Left colon (tissue), 2 donors: ENCODE measurements at regions of chr5 and their contacts with region 1.

Region 1: DNA sequence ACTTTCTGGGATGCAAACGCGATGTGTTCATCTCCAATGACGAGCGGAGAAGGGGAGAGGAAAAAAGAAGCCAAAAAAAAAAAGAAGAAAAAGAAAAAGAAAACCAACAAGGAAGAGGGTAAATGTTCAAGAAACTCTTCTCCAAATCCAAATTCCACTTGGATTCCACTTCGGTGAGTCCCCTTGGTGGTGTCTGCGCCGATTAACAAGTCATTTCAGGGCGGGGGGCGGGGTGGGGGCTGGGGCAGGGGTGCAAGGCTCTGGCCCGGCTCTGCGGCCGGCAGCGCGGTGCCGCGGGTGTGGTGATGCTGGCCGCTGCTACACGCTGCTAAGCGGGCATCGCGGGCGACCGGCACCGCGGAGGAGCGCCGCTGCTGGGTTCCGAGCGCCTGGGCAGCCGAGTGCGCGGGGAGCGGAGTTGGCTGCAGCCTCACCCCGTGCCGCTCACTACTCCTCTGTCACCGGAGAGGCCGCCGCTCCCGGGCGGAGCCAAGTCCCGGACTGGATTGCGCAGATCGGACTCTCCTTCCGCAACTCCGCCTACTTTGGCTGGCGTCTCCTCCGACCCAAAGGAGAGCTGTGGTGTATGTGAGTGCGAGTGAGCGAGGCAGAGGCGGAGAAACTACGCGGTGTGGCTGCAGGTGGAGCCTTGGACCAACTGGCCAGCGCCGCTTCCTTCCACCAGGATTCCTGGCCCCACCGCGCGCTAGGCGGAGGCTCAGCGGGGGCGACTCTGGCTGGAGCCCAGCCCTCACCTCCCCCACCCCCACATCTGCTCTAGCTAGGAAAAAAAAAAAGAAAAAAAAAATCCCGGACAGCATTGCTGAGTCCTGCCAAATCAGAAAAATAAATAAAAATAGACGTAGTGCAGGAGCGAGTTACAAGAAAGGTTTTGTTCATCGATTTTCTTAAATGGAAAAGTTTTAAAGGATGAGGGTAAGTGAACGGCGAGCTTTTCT is at the start of gene SEMA6A:
- DNase-seq: peak; percentile 95
- ATAC-seq: peak; percentile 76
- total RNA-seq, gene SEMA6A: 100 to 103 TPM

Region 2: GRCh38 chr5:116137544-116138378 is 436.9 kb before region 1 on chr5:
- intact Hi-C with region 1: loop called in 1 of 2 experiments (anchors 5 kb)
- DNase-seq: no peak
- ATAC-seq: peak; percentile 50

Region 3: DNA sequence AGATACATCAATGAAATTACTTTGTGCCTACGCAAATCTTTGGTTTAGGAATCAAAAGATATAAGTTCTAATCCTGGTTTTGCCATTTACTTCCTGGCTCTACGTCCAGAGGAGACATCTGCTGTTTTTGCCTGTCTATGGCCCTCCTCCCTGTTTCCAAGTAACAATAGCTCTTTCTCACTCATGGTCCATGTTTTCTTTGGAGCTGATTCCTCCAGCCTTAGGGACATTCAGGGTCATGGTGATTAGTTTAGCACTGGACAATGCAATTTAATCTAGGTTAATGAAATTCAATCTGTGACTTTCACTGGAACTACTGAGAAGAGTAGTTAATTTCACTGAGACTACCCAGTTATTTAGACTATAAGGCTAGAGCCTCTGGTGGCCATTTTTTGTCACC is 170.6 kb before region 1 on chr5:
- intact Hi-C with region 1: no loop called
- DNase-seq: no peak
- ATAC-seq: no peak

Region 4: DNA sequence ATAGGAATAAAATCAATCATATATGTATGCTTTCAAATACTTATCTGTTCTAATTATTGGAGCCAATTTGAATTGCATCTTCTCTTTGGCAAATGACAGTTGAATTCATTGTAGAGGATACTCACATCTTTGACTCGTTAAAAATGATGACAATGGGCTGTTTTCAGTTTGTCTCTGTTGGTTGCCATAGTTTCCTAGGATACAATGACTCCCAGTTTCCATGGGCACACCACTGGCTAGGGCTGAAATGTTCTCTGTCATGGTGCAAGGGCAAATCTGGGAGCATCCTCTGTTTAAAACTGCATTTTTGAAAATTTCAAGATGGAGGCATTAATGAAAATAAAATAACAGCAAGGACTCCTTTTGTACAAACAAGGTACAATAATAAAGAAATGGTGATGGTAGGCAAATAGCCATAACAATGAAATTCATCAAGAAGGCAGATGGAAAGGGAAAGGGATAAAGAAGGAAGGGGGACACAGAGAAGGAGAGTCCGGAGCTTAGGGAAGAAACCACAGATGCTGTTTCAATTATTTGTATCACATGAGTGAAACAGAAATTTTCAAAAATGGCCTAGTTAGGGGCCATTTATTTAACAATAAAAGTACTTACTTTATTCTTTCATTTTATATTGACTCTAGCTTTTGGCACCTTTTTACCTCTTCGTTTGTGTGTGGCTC is 378.7 kb after region 1 on chr5:
- intact Hi-C with region 1: loop called in 1 of 2 experiments (anchors 10 kb)
- DNase-seq: no peak
- ATAC-seq: no peak